OCI-LY7 (cell line): ENCODE measurements at regions of chr11 and their contacts with region 1.

Region 1: DNA sequence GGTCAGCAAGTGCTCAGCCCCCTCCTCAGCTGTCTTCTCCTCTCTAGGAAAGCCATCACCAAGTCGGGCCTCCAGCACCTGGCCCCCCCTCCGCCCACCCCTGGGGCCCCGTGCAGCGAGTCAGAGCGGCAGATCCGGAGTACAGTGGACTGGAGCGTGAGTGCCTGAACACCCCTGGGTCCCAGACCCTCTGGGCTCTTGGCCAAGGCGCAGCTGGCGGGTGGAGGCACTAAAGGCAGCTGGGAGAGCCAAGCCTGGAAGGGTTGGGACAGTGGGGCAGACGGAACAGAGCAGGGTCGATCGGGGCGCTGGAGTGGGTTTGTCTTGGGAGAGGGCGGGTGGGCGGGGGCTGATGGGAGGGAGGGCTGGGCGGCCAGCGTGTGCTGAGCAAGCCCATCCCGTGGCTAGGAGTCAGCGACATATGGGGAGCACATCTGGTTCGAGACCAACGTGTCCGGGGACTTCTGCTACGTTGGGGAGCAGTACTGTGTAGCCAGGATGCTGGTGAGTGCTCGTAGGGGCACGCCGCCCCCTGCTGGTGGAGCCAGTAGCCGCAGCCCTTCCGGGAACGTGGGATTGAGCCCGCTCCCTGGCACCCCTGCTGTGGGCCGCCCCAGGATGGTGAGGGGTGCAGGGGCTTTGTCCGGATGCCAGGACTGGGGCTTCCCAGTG is 14.1 kb upstream of the MDK start:
- DNase-seq: peak; percentile 69
- H3K4me3 ChIP-seq: no peak overlapping the region
- H3K27ac ChIP-seq: no peak overlapping the region
- H3K4me1 ChIP-seq: peaks cover 14% of the 10 kb centered on the region
- CTCF ChIP-seq: peak; percentile 77

Region 2: DNA sequence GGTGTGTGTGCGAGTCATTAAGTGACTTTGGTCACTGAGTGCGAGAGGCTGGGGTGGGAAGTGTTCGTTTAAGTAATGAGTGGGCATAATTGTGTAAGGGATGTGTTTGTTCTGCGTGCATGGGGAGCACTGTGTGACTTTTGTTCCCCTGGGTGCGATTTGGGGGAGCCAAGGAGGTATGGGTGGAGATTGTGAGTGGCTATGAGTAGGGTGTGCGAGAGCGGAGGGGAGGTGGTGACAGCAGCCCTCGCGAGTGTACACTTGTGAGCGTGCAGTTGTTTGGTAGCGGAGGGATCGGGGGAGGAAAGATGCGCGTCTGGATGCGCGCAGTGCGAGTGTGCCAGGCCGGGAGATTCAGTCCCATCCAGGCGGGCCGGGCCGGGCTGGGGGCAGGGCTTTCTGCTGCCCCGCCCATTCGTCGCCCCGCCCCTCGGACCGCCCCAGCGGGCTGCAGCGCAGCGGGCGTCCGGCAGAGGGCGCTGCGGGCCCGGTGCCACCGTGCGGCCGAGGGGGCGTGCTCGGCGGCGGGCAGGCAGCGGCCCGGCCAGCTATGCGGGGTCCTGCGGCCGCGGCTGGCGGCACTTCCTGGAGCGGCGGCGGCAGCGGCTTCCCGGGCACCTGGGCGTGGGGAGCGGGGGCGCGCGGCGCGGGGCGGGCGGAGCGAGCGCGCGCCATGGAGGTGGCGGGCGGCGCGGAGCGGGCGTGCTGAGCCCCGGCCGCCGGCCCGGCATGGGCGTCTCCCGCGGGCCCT is 20.3 kb before region 1 on chr11 and contains the start of gene DGKZ:
- CTCF ChIA-PET with region 1: interaction called, 10 read pairs
- POLR2A ChIA-PET with region 1: interaction called, 38 read pairs
- intact Hi-C with region 1: loop called (anchors 1 kb)
- DNase-seq: peak; percentile 89
- H3K4me3 ChIP-seq: peak within 1 kb of the TSS; percentile 100
- H3K27ac ChIP-seq: peak within 1 kb of the TSS; percentile 49
- H3K4me1 ChIP-seq: peaks cover 55% of the 10 kb centered on the region
- CTCF ChIP-seq: peak; percentile 70
- total RNA-seq, gene DGKZ: 110 and 134 TPM in 2 replicates

Region 3: GRCh38 chr11:46352063-46352841 is 15.1 kb before region 1 on chr11:
- CTCF ChIA-PET with region 1: interaction called, 10 read pairs
- POLR2A ChIA-PET with region 1: interaction called, 38 read pairs
- intact Hi-C with region 1: loop called (anchors 1 kb)
- DNase-seq: peak; percentile 71
- H3K4me3 ChIP-seq: no peak overlapping the region
- H3K27ac ChIP-seq: no peak overlapping the region
- H3K4me1 ChIP-seq: peaks cover 38% of the 10 kb centered on the region
- CTCF ChIP-seq: peak; percentile 89